Naive thymus-derived CD4-positive, alpha-beta T cell (primary cell): ENCODE measurements at regions of chrX and their contacts with region 1.

Region 1: GRCh38 chrX:70454441-70455365 is 10.1 kb downstream of the DLG3 start:
- DNase-seq: peak in 8 of 9 donors; percentile 39 to 72 (median 52)
- ATAC-seq: peak; percentile 80
- H3K4me3 ChIP-seq: peak overlapping the region; percentile 57
- H3K4me3 Mint-ChIP-seq: peak overlapping the region; percentile 66 to 93 (median 86)
- H3K27ac ChIP-seq: peak overlapping the region; percentile 60
- H3K27ac Mint-ChIP-seq: peak overlapping the region; percentile 40 to 95 (median 79)
- H3K4me1 ChIP-seq: peaks cover 8 to 11% of the 10 kb centered on the region in 2 donors
- H3K4me1 Mint-ChIP-seq: peaks cover 12 to 45% (median 32%) of the 10 kb centered on the region in 7 donors
- H3K27me3 ChIP-seq: no peaks in the 10 kb centered on the region
- H3K27me3 Mint-ChIP-seq: no peaks in the 10 kb centered on the region

Region 2: GRCh38 chrX:69189576-69190371 is 1264.9 kb before region 1 on chrX:
- CTCF ChIA-PET with region 1: no interaction called
- POLR2A ChIA-PET with region 1: no interaction called
- intact Hi-C with region 1: no loop called
- DNase-seq: no peak
- ATAC-seq: no peak
- H3K4me3 ChIP-seq: no peak overlapping the region
- H3K4me3 Mint-ChIP-seq: no peak overlapping the region
- H3K27ac ChIP-seq: no peak overlapping the region
- H3K27ac Mint-ChIP-seq: no peak overlapping the region
- H3K4me1 ChIP-seq: no peaks in the 10 kb centered on the region
- H3K4me1 Mint-ChIP-seq: peaks cover 0 to 2% (median 0%) of the 10 kb centered on the region in 7 donors
- H3K27me3 ChIP-seq: no peaks in the 10 kb centered on the region
- H3K27me3 Mint-ChIP-seq: no peaks in the 10 kb centered on the region

Region 3: GRCh38 chrX:70133303-70134115 is 321.2 kb before region 1 on chrX and contains the start of gene IGBP1:
- CTCF ChIA-PET with region 1: no interaction called
- POLR2A ChIA-PET with region 1: no interaction called
- intact Hi-C with region 1: loop called (anchors 1 kb)
- DNase-seq: peak; percentile 40 to 90 (median 82)
- ATAC-seq: peak; percentile 90
- H3K4me3 ChIP-seq: peak within 1 kb of the TSS; percentile 94
- H3K4me3 Mint-ChIP-seq: peak within 1 kb of the TSS; percentile 95 to 99 (median 99)
- H3K27ac ChIP-seq: peak within 1 kb of the TSS; percentile 82
- H3K27ac Mint-ChIP-seq: peak within 1 kb of the TSS; percentile 91 to 99 (median 97)
- H3K4me1 ChIP-seq: peaks cover 16 to 18% of the 10 kb centered on the region in 2 donors
- H3K4me1 Mint-ChIP-seq: peaks cover 14 to 47% (median 29%) of the 10 kb centered on the region in 7 donors
- H3K27me3 ChIP-seq: no peaks in the 10 kb centered on the region
- H3K27me3 Mint-ChIP-seq: no peaks in the 10 kb centered on the region
- total RNA-seq, gene IGBP1: 46.7 to 70.1 (median 58.9) TPM

Region 4: DNA sequence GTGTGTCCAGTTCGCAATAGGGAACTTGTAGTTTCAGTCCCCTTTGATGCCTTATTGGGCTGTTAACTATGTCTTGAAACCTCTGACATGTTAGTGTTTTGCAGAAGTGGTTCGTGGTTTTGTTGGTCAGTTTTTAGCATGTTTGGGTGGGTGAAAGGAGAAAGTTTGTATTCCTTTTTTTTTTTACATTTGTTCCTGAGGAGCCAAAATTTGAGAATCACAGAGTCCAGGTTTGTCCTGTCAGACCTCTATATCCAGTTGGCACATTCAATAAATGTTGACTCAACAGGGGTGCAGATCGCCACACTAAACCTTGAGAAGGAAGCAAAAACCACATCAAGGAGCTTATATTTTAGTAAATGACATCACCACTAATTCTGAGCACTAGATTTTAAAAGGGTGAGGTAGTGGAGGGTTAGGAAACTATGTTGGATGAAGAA is 16.2 kb after region 1 on chrX:
- CTCF ChIA-PET with region 1: no interaction called
- POLR2A ChIA-PET with region 1: no interaction called
- intact Hi-C with region 1: loop called in 1 of 2 experiments (anchors 2 kb)
- DNase-seq: no peak
- ATAC-seq: no peak
- H3K4me3 ChIP-seq: no peak overlapping the region
- H3K4me3 Mint-ChIP-seq: peak overlapping the region in 1 of 10 donors; percentile 10
- H3K27ac ChIP-seq: no peak overlapping the region
- H3K27ac Mint-ChIP-seq: no peak overlapping the region
- H3K4me1 ChIP-seq: no peaks in the 10 kb centered on the region
- H3K4me1 Mint-ChIP-seq: peaks cover 0 to 15% (median 13%) of the 10 kb centered on the region in 7 donors
- H3K27me3 ChIP-seq: no peaks in the 10 kb centered on the region
- H3K27me3 Mint-ChIP-seq: no peaks in the 10 kb centered on the region

Region 5: GRCh38 chrX:70554081-70554480 is 99.4 kb after region 1 on chrX:
- CTCF ChIA-PET with region 1: no interaction called
- POLR2A ChIA-PET with region 1: no interaction called
- intact Hi-C with region 1: loop called (anchors 1 to 2 kb)
- DNase-seq: no peak
- ATAC-seq: no peak
- H3K4me3 ChIP-seq: no peak overlapping the region
- H3K4me3 Mint-ChIP-seq: no peak overlapping the region
- H3K27ac ChIP-seq: no peak overlapping the region
- H3K27ac Mint-ChIP-seq: no peak overlapping the region
- H3K4me1 ChIP-seq: no peaks in the 10 kb centered on the region
- H3K4me1 Mint-ChIP-seq: peaks cover 0 to 9% (median 0%) of the 10 kb centered on the region in 7 donors
- H3K27me3 ChIP-seq: no peaks in the 10 kb centered on the region
- H3K27me3 Mint-ChIP-seq: peaks cover 0 to 4% (median 0%) of the 10 kb centered on the region in 5 donors

Region 6: DNA sequence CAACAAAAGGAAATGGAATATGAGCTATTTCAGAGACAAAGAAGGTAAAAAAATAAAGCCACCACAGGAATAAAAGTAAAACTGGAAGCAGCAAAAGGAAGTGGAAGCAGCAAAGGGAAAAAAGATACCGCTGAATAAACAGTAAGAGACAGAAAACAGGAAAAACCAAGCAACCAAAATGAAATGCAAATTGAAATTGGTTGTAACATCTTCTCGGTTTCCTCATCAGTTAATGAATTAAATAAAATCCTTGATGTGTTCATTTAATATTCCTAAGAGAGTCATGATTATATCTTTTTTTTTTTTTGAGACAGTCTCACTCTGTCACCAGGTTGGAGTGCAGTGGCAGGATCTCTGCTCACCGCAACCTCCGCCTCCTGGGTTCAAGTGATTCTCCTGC is 122.7 kb after region 1 on chrX:
- CTCF ChIA-PET with region 1: no interaction called
- POLR2A ChIA-PET with region 1: no interaction called
- intact Hi-C with region 1: no loop called
- DNase-seq: no peak
- ATAC-seq: no peak
- H3K4me3 ChIP-seq: no peak overlapping the region
- H3K4me3 Mint-ChIP-seq: no peak overlapping the region
- H3K27ac ChIP-seq: no peak overlapping the region
- H3K27ac Mint-ChIP-seq: no peak overlapping the region
- H3K4me1 ChIP-seq: no peaks in the 10 kb centered on the region
- H3K4me1 Mint-ChIP-seq: no peaks in the 10 kb centered on the region
- H3K27me3 ChIP-seq: no peaks in the 10 kb centered on the region
- H3K27me3 Mint-ChIP-seq: peaks cover 0 to 18% (median 12%) of the 10 kb centered on the region in 5 donors

Region 7: GRCh38 chrX:70664726-70665125 is 210.0 kb after region 1 on chrX:
- CTCF ChIA-PET with region 1: interaction called, 3 read pairs
- POLR2A ChIA-PET with region 1: no interaction called
- intact Hi-C with region 1: loop called (anchors 1 kb)
- DNase-seq: peak in 3 of 9 donors; percentile 1 to 11 (median 1)
- ATAC-seq: no peak
- H3K4me3 ChIP-seq: no peak overlapping the region
- H3K4me3 Mint-ChIP-seq: no peak overlapping the region
- H3K27ac ChIP-seq: no peak overlapping the region
- H3K27ac Mint-ChIP-seq: no peak overlapping the region
- H3K4me1 ChIP-seq: no peaks in the 10 kb centered on the region
- H3K4me1 Mint-ChIP-seq: no peaks in the 10 kb centered on the region
- H3K27me3 ChIP-seq: no peaks in the 10 kb centered on the region
- H3K27me3 Mint-ChIP-seq: peaks cover 0 to 11% (median 0%) of the 10 kb centered on the region in 5 donors

Region 8: GRCh38 chrX:70720721-70721120 is 266.0 kb after region 1 on chrX:
- CTCF ChIA-PET with region 1: no interaction called
- POLR2A ChIA-PET with region 1: no interaction called
- intact Hi-C with region 1: no loop called
- DNase-seq: no peak
- ATAC-seq: no peak
- H3K4me3 ChIP-seq: no peak overlapping the region
- H3K4me3 Mint-ChIP-seq: no peak overlapping the region
- H3K27ac ChIP-seq: no peak overlapping the region
- H3K27ac Mint-ChIP-seq: no peak overlapping the region
- H3K4me1 ChIP-seq: no peaks in the 10 kb centered on the region
- H3K4me1 Mint-ChIP-seq: no peaks in the 10 kb centered on the region
- H3K27me3 ChIP-seq: no peaks in the 10 kb centered on the region
- H3K27me3 Mint-ChIP-seq: peaks cover 0 to 2% (median 0%) of the 10 kb centered on the region in 5 donors

Region 9: GRCh38 chrX:70960728-70961127 is 506.0 kb after region 1 on chrX:
- CTCF ChIA-PET with region 1: no interaction called
- POLR2A ChIA-PET with region 1: no interaction called
- intact Hi-C with region 1: loop called in 1 of 2 experiments (anchors 1 kb)
- DNase-seq: no peak
- ATAC-seq: no peak
- H3K4me3 ChIP-seq: no peak overlapping the region
- H3K4me3 Mint-ChIP-seq: no peak overlapping the region
- H3K27ac ChIP-seq: no peak overlapping the region
- H3K27ac Mint-ChIP-seq: no peak overlapping the region
- H3K4me1 ChIP-seq: no peaks in the 10 kb centered on the region
- H3K4me1 Mint-ChIP-seq: peaks cover 0 to 6% (median 0%) of the 10 kb centered on the region in 7 donors
- H3K27me3 ChIP-seq: no peaks in the 10 kb centered on the region
- H3K27me3 Mint-ChIP-seq: peaks cover 0 to 27% (median 0%) of the 10 kb centered on the region in 5 donors

Region 10: DNA sequence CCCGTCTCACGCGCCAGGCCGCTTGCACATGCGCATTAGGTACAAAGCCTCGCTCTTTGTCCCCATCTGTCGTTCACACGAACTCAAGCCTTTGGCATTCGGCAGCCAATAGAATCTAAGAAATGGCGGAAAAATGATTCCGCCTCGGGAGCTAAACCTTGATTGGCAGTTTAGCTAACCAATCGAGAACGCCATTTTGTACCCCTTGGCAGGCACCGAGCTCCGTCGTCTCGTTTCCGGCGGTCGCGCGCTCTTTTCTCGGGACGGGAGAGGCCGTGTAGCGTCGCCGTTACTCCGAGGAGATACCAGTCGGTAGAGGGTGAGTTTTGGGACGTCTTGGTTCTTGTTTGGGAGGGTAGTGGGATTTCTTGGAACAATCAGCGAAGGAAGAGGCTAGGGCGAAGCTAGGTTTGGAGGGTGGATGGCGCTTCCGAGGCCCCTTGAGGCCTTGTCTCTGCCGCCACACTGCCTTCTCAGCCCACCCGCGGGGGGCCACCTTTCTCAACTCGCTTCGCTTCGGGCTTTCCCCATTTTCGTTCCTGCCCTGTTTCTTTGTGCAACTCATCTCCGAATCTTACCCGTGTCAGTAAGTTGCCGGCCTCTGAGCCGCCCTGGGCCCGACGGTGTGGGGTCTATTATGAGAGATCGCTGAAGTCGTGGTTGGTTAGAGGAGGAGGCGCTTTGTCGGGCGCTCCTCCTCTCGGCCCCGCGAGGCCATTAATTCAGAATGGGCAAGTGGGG is 828.9 kb after region 1 on chrX and contains the start of gene NONO:
- CTCF ChIA-PET with region 1: no interaction called
- POLR2A ChIA-PET with region 1: no interaction called
- intact Hi-C with region 1: loop called in 1 of 2 experiments (anchors 10 kb)
- DNase-seq: peak; percentile 48 to 96 (median 89)
- ATAC-seq: peak; percentile 91
- H3K4me3 ChIP-seq: peak within 1 kb of the TSS; percentile 88
- H3K4me3 Mint-ChIP-seq: peak within 1 kb of the TSS; percentile 94 to 99 (median 98)
- H3K27ac ChIP-seq: peak within 1 kb of the TSS; percentile 93
- H3K27ac Mint-ChIP-seq: peak within 1 kb of the TSS; percentile 97 to 100 (median 99)
- H3K4me1 ChIP-seq: peaks cover 0 to 8% of the 10 kb centered on the region in 2 donors
- H3K4me1 Mint-ChIP-seq: peaks cover under 1 to 28% (median 17%) of the 10 kb centered on the region in 7 donors
- H3K27me3 ChIP-seq: no peaks in the 10 kb centered on the region
- H3K27me3 Mint-ChIP-seq: peaks cover 0 to 3% (median 0%) of the 10 kb centered on the region in 5 donors
- total RNA-seq, gene NONO: 334 to 488 (median 371) TPM